K562 (cell line): ENCODE measurements at regions of chr11 and their contacts with region 1.

Region 1: DNA sequence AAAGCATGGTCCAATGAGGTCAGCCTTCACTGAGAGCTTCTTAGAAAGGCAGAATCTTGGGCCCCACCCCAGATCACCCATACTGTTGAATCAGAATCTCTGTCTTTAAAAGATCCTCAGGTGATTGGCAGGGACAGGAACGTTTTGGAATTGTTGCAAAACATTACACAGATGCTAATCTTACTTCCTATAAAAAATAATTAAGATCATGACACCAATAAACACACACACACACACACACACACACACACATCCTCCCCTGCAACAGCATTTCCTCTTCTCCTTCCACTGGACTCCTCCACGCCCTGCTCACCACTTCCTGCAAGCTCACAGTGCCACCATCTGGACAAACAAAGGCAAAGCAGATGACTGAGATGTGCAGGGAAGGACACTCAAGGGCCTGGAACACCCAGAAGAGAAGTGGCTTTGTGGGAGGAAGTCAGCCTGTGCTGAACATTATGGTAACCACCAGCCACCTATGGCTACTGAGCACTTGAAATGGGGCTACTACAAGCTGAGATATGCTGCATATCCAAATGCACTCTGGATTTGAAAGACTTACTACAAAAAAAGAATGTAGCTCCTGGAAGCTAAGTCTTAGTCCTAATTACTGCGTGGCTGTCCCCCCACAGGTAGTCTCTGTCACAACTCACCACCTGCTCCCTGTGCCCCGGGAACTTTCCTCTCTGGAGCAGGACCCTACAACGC is 65.6 kb downstream of the BTG4 start:
- DNase-seq: peak; percentile 78 to 84 (median 82)
- ATAC-seq: peak; percentile 99
- H3K4me3 ChIP-seq: no peak overlapping the region
- H3K27ac ChIP-seq: no peak overlapping the region
- H3K4me1 ChIP-seq: no peaks in the 10 kb centered on the region
- H3K27me3 ChIP-seq: peaks cover 0 to 11% of the 10 kb centered on the region in 2 experiments; a peak in 2 of 5 replicates
- CTCF ChIP-seq: peak; percentile 86 to 89 (median 89)
- EP300 ChIP-seq: no peak
- POLR2A ChIP-seq: no peak
- RAD21 ChIP-seq: peak; percentile 91 to 92

Region 2: GRCh38 chr11:110463153-110463552 is 983.4 kb before region 1 on chr11:
- CTCF ChIA-PET with region 1: no interaction called
- POLR2A ChIA-PET with region 1: no interaction called
- in situ Hi-C with region 1: loop called (anchors 10 kb)
- intact Hi-C with region 1: no loop called
- DNase-seq: peak in 2 of 4 experiments; percentile 12 to 51
- ATAC-seq: peak; percentile 99
- H3K4me3 ChIP-seq: no peak overlapping the region
- H3K27ac ChIP-seq: no peak overlapping the region
- H3K4me1 ChIP-seq: no peaks in the 10 kb centered on the region
- H3K27me3 ChIP-seq: no peaks in the 10 kb centered on the region
- CTCF ChIP-seq: peak; percentile 48 to 55 (median 54); a peak in 5 of 6 replicates
- EP300 ChIP-seq: no peak
- POLR2A ChIP-seq: no peak
- RAD21 ChIP-seq: peak; percentile 73

Region 3: GRCh38 chr11:111283945-111284481 is 162.5 kb before region 1 on chr11:
- CTCF ChIA-PET with region 1: interaction called, 15 read pairs
- POLR2A ChIA-PET with region 1: no interaction called
- in situ Hi-C with region 1: loop called (anchors 10 kb)
- intact Hi-C with region 1: loop called (anchors 1 kb)
- DNase-seq: no peak
- ATAC-seq: peak; percentile 62
- H3K4me3 ChIP-seq: no peak overlapping the region
- H3K27ac ChIP-seq: no peak overlapping the region
- H3K4me1 ChIP-seq: peaks cover 0 to 3% of the 10 kb centered on the region in 2 experiments; a peak in 1 of 5 replicates
- H3K27me3 ChIP-seq: peaks cover 0 to 20% of the 10 kb centered on the region in 2 experiments; a peak in 3 of 5 replicates
- CTCF ChIP-seq: no peak
- EP300 ChIP-seq: no peak
- POLR2A ChIP-seq: no peak
- RAD21 ChIP-seq: no peak

Region 4: DNA sequence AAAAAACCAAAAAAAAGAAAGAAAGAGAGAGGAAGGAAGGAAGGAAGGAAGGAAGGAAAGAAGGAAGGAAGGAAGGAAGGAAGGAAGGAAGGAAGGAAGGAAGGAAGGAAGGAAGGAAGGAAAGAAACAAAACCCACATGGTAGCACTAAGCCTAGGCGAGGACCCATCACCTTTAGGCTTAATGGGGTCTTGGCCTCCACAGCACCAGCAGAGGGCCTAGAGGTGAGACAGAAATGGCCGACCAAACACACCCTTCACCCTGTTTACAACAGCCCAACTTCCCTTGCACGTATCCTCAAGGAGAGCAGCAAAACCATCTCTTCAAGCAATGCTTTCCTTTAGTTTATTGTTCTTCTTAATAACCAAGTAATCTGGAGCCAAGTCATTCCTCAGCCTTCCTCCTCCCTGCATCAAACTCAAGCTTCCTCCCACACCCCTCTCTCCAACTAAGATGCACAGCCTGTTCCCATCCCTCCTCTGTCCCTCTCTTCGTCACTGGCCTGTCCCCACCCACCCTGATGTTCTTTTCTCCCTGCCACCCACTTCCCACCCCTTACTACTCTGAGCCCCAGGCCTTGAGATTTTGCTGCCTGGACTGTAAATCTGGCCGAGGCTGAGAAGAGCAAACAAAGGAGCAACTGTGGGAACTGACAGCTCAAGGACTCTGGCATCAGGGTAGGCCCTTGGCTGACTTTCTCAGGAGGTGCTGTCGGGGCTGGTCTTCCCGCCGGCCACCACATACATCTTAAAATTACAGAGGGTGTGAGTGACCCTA is 93.4 kb before region 1 on chr11:
- CTCF ChIA-PET with region 1: no interaction called
- POLR2A ChIA-PET with region 1: no interaction called
- in situ Hi-C with region 1: no loop called
- intact Hi-C with region 1: no loop called
- DNase-seq: no peak
- ATAC-seq: no peak
- H3K4me3 ChIP-seq: no peak overlapping the region
- H3K27ac ChIP-seq: no peak overlapping the region
- H3K4me1 ChIP-seq: no peaks in the 10 kb centered on the region
- H3K27me3 ChIP-seq: no peaks in the 10 kb centered on the region; a peak in 1 of 5 replicates
- CTCF ChIP-seq: no peak
- EP300 ChIP-seq: no peak
- POLR2A ChIP-seq: no peak
- RAD21 ChIP-seq: no peak